OCI-LY7 (cell line): ENCODE measurements at regions of chr6 and their contacts with region 1.

Region 1: DNA sequence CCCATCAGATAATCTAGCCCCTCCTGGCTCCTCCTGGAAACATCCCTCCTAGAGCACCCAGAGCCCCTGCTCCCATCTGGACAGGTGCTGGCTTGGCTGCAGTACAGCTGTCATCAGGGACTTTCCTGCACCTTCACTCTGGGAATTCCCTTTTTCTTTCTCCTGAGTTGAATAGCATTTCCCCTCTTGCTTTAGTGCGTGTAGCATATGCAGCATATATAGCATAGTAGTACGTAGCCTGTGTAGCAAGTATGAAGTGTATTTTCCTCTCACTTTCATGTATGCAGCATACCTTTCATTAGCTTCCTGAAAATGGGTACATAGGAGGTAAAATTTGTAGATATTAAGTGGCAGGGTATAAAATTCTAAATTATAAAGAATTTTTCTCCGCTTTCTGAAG is 352.9 kb downstream of the ESR1 start:
- DNase-seq: no peak
- H3K4me3 ChIP-seq: no peak overlapping the region
- H3K27ac ChIP-seq: no peak overlapping the region
- H3K4me1 ChIP-seq: no peaks in the 10 kb centered on the region
- CTCF ChIP-seq: no peak

Region 2: GRCh38 chr6:152034631-152035030 is 125.7 kb before region 1 on chr6:
- CTCF ChIA-PET with region 1: no interaction called
- POLR2A ChIA-PET with region 1: no interaction called
- intact Hi-C with region 1: no loop called
- DNase-seq: no peak
- H3K4me3 ChIP-seq: no peak overlapping the region
- H3K27ac ChIP-seq: no peak overlapping the region
- H3K4me1 ChIP-seq: no peaks in the 10 kb centered on the region
- CTCF ChIP-seq: no peak

Region 3: GRCh38 chr6:152143359-152143758 is 17.0 kb before region 1 on chr6:
- CTCF ChIA-PET with region 1: no interaction called
- POLR2A ChIA-PET with region 1: interaction called, 11 read pairs
- intact Hi-C with region 1: no loop called
- DNase-seq: no peak
- H3K4me3 ChIP-seq: no peak overlapping the region
- H3K27ac ChIP-seq: no peak overlapping the region
- H3K4me1 ChIP-seq: no peaks in the 10 kb centered on the region
- CTCF ChIP-seq: no peak